WTC11 (cell line): ENCODE measurements at regions of chr1 and their contacts with region 1.

Region 1: DNA sequence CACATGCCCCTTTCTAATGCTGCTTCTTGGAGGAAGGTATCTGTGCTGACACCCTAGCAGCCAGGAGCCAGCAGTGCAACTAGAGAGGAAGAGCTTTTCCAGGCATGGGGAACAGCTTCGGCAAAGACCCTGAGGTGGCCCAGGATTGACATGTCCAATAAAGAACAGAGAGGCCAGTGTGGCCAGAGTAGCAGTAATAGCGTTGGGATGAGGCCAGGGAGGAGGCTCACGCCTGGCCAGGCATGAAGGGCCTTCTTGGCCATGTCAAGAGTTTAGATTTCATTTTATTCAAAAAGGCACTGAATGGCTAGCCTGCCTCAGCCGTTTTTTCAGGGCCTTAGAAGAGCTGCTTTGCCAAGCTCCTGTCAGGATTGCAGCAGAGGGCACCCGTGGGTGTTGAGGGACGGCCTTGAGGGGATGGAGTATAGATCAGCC is 16.3 kb upstream of the ADAMTSL4 start:
- DNase-seq: no peak
- ATAC-seq: no peak
- H3K4me3 Mint-ChIP-seq: no peak overlapping the region
- H3K27ac Mint-ChIP-seq: no peak overlapping the region
- H3K4me1 Mint-ChIP-seq: peaks cover 8% of the 10 kb centered on the region
- H3K27me3 Mint-ChIP-seq: no peaks in the 10 kb centered on the region
- CTCF ChIP-seq: no peak; the same call in none of the 2 replicates

Region 2: DNA sequence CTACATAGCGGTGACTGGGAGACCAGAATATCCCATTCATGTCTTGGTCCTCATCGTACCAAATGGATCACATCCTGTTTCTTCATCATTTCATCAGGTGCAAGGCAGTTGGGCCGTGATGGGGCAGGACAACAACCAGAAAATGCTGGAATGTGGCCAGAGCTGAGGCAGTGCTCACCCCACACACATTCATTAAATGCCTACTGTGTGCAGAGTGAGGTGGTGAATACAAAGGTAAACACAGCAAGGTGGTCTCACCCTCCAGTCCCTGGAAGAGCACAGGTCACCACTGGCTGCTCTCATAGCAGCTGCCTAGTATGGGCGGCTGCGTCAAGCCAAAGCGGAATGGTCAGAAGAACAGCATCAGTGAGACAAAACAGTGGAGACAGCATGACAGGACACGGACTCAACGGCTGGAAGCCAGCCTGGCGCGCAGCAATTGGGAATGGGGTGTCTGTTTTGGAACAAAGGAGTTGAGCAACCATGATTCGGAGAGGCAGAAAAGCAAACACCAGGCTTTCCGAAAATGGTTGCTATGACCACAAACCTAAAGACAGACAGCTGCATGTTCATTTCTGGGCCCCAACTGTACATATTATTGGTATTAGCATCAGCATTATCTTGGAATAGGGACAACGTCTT is 10.7 kb after region 1 on chr1:
- CTCF ChIA-PET with region 1: interaction called, 124 read pairs
- POLR2A ChIA-PET with region 1: no interaction called
- DNase-seq: no peak
- ATAC-seq: no peak
- H3K4me3 Mint-ChIP-seq: no peak overlapping the region
- H3K27ac Mint-ChIP-seq: no peak overlapping the region
- H3K4me1 Mint-ChIP-seq: peaks cover 6% of the 10 kb centered on the region
- H3K27me3 Mint-ChIP-seq: peaks cover 22% of the 10 kb centered on the region
- CTCF ChIP-seq: no peak